Activated CD4-positive, alpha-beta memory T cell treated with anti-CD3 and anti-CD28 coated beads for 36 hours (primary cell): ENCODE measurements at regions of chr1 and their contacts with region 1.

Region 1: DNA sequence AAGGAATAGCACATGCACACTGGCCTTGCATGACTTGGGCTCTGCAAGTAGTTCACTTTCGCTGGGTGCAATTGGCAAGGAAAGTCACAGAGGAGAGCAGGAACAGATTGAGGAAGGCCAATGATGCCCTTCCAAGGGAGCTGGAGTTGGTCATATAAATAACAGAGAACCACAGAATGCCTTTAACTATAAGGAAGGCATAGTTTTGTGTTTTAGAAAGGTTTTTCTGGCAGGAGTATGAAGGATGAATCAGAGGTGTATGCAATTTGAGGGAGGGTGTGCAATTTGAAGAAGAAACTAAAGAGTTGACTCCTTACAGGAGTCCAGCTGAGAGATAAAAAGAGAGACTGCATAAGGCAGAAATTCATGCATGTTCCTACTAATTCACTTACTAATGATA is 112.1 kb downstream of the PHTF1 start:
- DNase-seq: no peak
- H3K4me3 Mint-ChIP-seq: no peak overlapping the region
- H3K27ac Mint-ChIP-seq: no peak overlapping the region
- H3K4me1 Mint-ChIP-seq: no peaks in the 10 kb centered on the region
- H3K27me3 Mint-ChIP-seq: no peaks in the 10 kb centered on the region

Region 2: GRCh38 chr1:113579256-113580018 is 67.7 kb before region 1 on chr1:
- CTCF ChIA-PET with region 1: no interaction called
- POLR2A ChIA-PET with region 1: no interaction called
- intact Hi-C with region 1: no loop called
- DNase-seq: no peak
- H3K4me3 Mint-ChIP-seq: no peak overlapping the region
- H3K27ac Mint-ChIP-seq: no peak overlapping the region
- H3K4me1 Mint-ChIP-seq: no peaks in the 10 kb centered on the region
- H3K27me3 Mint-ChIP-seq: no peaks in the 10 kb centered on the region

Region 3: DNA sequence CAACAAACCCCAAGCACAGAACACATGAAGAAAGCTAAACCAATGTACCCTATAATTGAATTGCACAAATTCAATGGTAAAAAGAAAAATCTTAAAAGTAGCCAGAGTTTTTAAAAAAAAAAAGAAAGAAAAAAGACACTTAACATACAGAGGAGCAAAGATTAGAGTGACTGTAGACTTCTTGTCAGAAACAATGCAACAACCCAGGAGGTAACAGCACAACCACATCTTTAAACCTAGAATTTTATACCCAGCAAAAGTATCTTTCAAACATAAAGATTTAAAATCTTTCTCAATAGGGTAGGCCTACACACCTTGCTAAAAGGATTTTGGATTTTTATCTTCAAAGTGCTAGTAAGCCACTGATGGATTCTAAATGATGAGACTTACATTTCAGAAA is 47.7 kb after region 1 on chr1:
- CTCF ChIA-PET with region 1: no interaction called
- POLR2A ChIA-PET with region 1: no interaction called
- intact Hi-C with region 1: loop called (anchors 2 kb)
- DNase-seq: no peak
- H3K4me3 Mint-ChIP-seq: no peak overlapping the region
- H3K27ac Mint-ChIP-seq: no peak overlapping the region
- H3K4me1 Mint-ChIP-seq: no peaks in the 10 kb centered on the region
- H3K27me3 Mint-ChIP-seq: no peaks in the 10 kb centered on the region